ENCODE measurements at regions of chr20 and their contacts with region 1.

Region 1: GRCh38 chr20:51712501-51713197 is 55.5 kb downstream of the ATP9A start:
- DNase-seq: peak; percentile 52
- ATAC-seq: peak; percentile 49
- H3K4me3 Mint-ChIP-seq: no peak overlapping the region
- H3K27ac Mint-ChIP-seq: 0 out of 2 replicates have a peak overlapping the region, but pooled peaks have one; percentile 15
- H3K4me1 Mint-ChIP-seq: peaks cover 48% of the 10 kb centered on the region
- H3K27me3 Mint-ChIP-seq: no peaks in the 10 kb centered on the region
- CTCF ChIP-seq: peak; percentile 47

Region 2: GRCh38 chr20:51671058-51671457 is 41.6 kb before region 1 on chr20:
- CTCF ChIA-PET with region 1: no interaction called
- POLR2A ChIA-PET with region 1: no interaction called
- DNase-seq: no peak
- ATAC-seq: no peak
- H3K4me3 Mint-ChIP-seq: no peak overlapping the region
- H3K27ac Mint-ChIP-seq: peak overlapping the region; percentile 71
- H3K4me1 Mint-ChIP-seq: peaks cover 9% of the 10 kb centered on the region; the same call in 1 of the 2 replicates
- H3K27me3 Mint-ChIP-seq: no peaks in the 10 kb centered on the region
- CTCF ChIP-seq: no peak

Region 3: DNA sequence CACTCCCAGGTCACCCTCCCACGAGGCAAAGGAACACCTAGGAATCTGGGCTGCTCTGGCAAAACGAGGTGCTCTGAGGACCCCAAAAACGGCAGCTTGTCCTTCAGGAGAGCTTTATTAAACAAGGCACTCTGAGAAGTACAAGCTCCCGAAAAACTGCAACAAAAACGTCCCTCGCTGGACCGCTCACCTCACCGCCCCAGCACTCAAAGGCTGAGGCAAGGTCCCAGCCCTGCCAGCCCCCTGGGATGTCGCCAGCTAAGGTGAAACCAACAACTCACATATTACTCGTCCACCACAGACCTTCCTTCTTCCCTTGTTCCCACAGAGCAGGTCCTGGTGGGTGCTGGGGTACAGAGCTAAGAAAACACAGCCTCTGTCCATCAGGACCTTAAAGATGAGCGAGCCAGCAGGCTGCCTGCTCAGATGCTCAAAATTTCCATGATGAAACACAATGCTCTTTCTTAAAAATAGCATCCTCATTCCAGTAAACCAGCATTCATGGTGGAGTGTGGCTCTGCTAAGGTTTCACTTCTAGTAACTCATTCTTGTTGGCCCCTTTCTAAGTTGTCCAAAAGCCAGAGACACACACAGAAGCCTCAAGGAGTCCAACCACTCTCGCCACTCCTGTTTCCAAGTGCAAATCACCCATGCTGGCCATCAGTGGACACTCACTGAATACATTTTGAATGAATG is 19.6 kb after region 1 on chr20:
- CTCF ChIA-PET with region 1: interaction called, 11 read pairs
- POLR2A ChIA-PET with region 1: no interaction called
- DNase-seq: no peak
- ATAC-seq: no peak
- H3K4me3 Mint-ChIP-seq: no peak overlapping the region
- H3K27ac Mint-ChIP-seq: peak overlapping the region; percentile 83; the same call in 1 of the 2 replicates
- H3K4me1 Mint-ChIP-seq: peaks cover 10% of the 10 kb centered on the region
- H3K27me3 Mint-ChIP-seq: no peaks in the 10 kb centered on the region
- CTCF ChIP-seq: no peak

Measured in WTC11 (cell line).